ENCODE measurements at regions of chr18 and their contacts with region 1.

Region 1: DNA sequence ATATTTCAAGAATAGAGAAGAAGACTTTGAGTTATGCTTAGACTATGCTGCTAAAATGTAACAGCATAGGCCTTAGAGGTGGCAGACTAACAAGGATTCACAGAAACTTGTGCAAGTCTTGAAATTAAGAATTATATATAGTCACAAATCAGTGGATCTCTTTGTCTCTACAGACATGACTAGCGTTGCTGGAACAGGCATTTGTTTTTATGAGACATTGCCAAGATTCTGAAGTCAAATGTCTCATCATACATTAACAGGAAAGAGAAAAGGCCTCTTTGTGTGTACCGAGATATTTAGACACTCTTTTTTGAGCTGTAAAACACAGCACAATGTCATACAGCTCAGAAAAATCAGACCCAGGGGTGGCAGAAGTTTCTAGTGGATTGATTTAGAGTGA is 207.1 kb downstream of the TMX3 start:
- DNase-seq: no peak
- ATAC-seq: no peak
- H3K4me3 ChIP-seq: no peak overlapping the region
- H3K4me3 Mint-ChIP-seq: no peak overlapping the region
- H3K27ac ChIP-seq: no peak overlapping the region
- H3K27ac Mint-ChIP-seq: no peak overlapping the region
- H3K4me1 ChIP-seq: no peaks in the 10 kb centered on the region
- H3K4me1 Mint-ChIP-seq: no peaks in the 10 kb centered on the region
- H3K27me3 ChIP-seq: no peaks in the 10 kb centered on the region
- H3K27me3 Mint-ChIP-seq: no peaks in the 10 kb centered on the region
- CTCF ChIP-seq: no peak

Region 2: GRCh38 chr18:68520406-68521075 is 12.8 kb after region 1 on chr18:
- CTCF ChIA-PET with region 1: no interaction called
- POLR2A ChIA-PET with region 1: no interaction called
- intact Hi-C with region 1: no loop called
- DNase-seq: no peak
- ATAC-seq: no peak
- H3K4me3 ChIP-seq: no peak overlapping the region
- H3K4me3 Mint-ChIP-seq: no peak overlapping the region
- H3K27ac ChIP-seq: no peak overlapping the region
- H3K27ac Mint-ChIP-seq: no peak overlapping the region
- H3K4me1 ChIP-seq: no peaks in the 10 kb centered on the region
- H3K4me1 Mint-ChIP-seq: no peaks in the 10 kb centered on the region
- H3K27me3 ChIP-seq: no peaks in the 10 kb centered on the region
- H3K27me3 Mint-ChIP-seq: peaks cover 4% of the 10 kb centered on the region
- CTCF ChIP-seq: no peak

Region 3: GRCh38 chr18:68564961-68565360 is 57.2 kb after region 1 on chr18:
- CTCF ChIA-PET with region 1: no interaction called
- POLR2A ChIA-PET with region 1: no interaction called
- intact Hi-C with region 1: loop called in 1 of 2 experiments (anchors 5 kb)
- DNase-seq: no peak
- ATAC-seq: no peak
- H3K4me3 ChIP-seq: no peak overlapping the region
- H3K4me3 Mint-ChIP-seq: no peak overlapping the region
- H3K27ac ChIP-seq: no peak overlapping the region
- H3K27ac Mint-ChIP-seq: no peak overlapping the region
- H3K4me1 ChIP-seq: no peaks in the 10 kb centered on the region
- H3K4me1 Mint-ChIP-seq: no peaks in the 10 kb centered on the region
- H3K27me3 ChIP-seq: no peaks in the 10 kb centered on the region
- H3K27me3 Mint-ChIP-seq: peaks cover 2% of the 10 kb centered on the region
- CTCF ChIP-seq: no peak

Measured in CD8-positive, alpha-beta T cell (primary cell).